Activated CD8-positive, alpha-beta T cell treated with anti-CD3 and anti-CD28 coated beads for 36 hours (primary cell): ENCODE measurements at regions of chr16 and their contacts with region 1.

Region 1: DNA sequence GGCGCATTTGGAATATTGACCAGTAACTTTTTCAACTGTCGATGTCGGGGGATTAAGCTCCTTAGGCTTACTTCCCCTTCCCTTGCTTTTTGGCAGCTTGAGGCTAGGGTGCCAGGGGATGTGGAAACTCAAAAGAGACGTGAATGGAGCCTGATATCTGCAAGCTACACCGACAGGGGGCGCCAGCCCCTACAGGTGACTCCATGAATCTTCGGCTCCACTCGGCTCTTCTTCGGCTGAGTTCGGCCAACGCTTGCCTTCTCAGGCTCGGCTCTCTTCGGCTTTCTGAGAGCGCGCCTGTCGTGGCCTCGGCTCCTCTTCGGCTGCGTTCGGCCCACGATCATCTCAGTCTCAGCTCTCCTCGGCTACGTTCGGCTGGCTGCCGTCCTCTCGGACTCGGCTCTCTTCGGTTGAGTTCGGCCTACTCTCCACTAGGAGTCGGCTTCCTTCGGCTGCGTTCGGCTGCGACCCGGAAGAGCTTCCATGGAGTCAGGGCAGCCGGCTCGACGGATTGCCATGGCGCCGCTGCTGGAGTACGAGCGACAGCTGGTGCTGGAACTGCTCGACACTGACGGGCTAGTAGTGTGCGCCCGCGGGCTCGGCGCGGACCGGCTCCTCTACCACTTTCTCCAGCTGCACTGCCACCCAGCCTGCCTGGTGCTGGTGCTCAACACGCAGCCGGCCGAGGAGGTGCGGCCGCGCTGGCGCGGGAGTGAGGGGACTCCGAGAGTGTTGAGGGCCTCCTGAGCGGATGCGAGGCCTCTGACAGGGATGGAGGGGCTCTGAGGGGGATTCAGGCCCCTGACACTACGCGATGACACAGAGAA is at the start of gene ERCC4:
- DNase-seq: peak; percentile 100
- ATAC-seq: peak; percentile 98
- H3K4me3 Mint-ChIP-seq: peak within 1 kb of the TSS; percentile 93
- H3K27ac Mint-ChIP-seq: peak within 1 kb of the TSS; percentile 84
- H3K4me1 Mint-ChIP-seq: peaks cover 18% of the 10 kb centered on the region
- H3K27me3 Mint-ChIP-seq: no peaks in the 10 kb centered on the region
- CTCF ChIP-seq: peak; percentile 92
- total RNA-seq, gene ERCC4: 6.2 to 13.3 TPM

Region 2: DNA sequence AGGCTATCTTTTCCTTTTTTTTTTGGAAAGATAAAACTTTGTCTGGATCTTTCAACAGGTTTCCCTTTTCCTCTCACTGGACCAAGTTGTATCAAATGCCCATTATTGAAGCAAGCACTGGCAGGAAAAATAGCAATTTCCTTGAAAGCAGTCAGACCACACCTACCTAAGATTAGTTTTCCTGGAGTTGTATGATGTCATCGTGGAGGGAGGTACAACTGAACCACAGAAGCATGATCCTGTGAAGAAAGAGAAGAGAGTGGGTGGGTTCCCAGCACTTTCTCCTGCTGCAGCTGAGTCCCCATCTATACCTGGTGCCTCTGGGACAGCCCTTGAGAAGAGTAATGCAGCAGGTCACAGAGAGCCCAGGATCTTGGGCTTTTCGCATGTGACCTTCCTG is 63.5 kb before region 1 on chr16:
- CTCF ChIA-PET with region 1: no interaction called
- POLR2A ChIA-PET with region 1: no interaction called
- intact Hi-C with region 1: no loop called
- DNase-seq: no peak
- ATAC-seq: no peak
- H3K4me3 Mint-ChIP-seq: no peak overlapping the region
- H3K27ac Mint-ChIP-seq: no peak overlapping the region
- H3K4me1 Mint-ChIP-seq: no peaks in the 10 kb centered on the region
- H3K27me3 Mint-ChIP-seq: peaks cover 20% of the 10 kb centered on the region
- CTCF ChIP-seq: no peak

Region 3: DNA sequence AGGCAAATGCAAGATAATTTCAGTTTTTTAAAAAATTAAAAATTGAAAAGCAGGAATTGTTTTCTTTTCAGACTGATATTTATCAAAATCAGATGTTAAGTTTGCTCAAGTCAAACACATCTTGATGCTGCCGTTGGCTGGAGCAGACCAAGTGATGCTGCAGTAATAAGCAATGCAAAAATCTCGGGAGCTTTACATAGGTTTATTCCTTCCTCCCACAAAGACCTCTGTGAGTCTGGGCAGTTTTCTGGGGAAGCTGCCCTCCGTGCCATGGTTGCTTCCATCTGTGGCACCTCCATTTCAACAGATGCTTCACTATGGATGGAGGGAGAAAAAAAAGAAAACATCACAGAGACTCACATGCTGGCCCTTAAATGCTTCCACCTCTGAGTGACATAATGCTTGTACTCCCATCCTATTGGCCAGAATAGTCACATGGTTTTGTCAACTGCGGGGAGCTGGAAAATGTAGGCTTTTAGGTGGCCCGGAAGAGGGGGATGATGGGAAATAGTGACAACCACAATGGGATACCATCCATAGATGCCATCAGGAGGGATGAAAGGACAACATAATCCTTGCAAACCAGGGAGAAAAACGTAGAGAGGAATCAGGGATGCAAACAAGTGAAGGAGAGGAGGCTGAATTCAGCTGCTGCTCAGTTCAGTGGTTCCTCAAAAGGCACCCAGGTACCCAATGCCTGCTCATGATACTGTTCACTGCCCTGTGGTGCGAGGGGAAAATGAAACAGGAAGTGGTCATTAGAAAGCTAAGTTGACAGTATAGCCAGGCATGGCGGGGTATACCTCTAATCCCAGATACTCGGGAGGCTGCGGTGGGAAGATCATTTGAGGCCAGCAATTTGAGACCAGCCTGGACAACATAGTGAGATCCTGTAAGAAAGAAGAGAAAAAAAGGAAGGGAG is 13.5 kb before region 1 on chr16:
- CTCF ChIA-PET with region 1: interaction called, 40 read pairs
- POLR2A ChIA-PET with region 1: no interaction called
- intact Hi-C with region 1: no loop called
- DNase-seq: no peak
- ATAC-seq: no peak
- H3K4me3 Mint-ChIP-seq: no peak overlapping the region
- H3K27ac Mint-ChIP-seq: no peak overlapping the region
- H3K4me1 Mint-ChIP-seq: peaks cover 4% of the 10 kb centered on the region
- H3K27me3 Mint-ChIP-seq: peaks cover 31% of the 10 kb centered on the region
- CTCF ChIP-seq: no peak

Region 4: GRCh38 chr16:13940397-13940933 is 20.6 kb after region 1 on chr16:
- CTCF ChIA-PET with region 1: interaction called, 74 read pairs
- POLR2A ChIA-PET with region 1: no interaction called
- intact Hi-C with region 1: no loop called
- DNase-seq: no peak
- ATAC-seq: no peak
- H3K4me3 Mint-ChIP-seq: no peak overlapping the region
- H3K27ac Mint-ChIP-seq: no peak overlapping the region
- H3K4me1 Mint-ChIP-seq: peaks cover 8% of the 10 kb centered on the region
- H3K27me3 Mint-ChIP-seq: no peaks in the 10 kb centered on the region
- CTCF ChIP-seq: no peak

Region 5: DNA sequence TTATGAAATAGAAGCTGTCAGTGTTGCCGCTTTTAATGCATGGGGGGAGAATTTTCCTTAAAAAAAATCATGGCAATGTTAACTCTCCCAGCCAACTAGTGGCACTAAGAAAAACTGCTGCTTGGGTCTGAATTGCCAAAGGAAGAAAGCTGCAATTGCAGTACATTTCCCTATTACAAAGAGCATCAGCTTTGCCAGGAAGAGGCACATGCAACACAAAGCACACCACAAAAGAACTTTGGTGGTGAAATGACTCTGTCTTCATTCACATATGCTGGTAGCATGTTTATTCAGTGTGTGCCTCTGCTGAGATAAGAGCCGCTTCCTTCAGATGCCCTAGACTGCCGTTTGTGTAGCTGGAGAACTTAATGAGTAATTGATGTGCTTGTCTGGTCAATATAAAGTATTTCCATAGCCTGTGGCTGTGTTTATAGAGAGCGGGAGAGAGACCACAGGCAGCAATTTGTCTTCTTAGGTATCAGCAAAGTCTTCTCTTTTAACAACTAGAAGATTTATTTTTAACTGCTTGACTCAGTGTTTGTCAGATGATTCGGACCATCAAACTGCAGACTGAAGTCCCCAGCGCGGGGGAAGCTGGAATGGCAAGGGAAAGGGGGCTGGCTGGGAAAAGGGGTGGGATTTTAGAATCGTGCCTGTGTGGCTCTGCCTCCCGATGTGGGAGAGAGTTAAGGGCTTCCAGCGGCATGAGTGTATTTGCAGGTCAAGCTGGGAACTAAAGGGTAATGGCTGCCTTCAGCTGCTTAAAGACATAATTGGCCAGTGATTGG is 266.3 kb after region 1 on chr16:
- CTCF ChIA-PET with region 1: interaction called, 17 read pairs
- POLR2A ChIA-PET with region 1: no interaction called
- intact Hi-C with region 1: no loop called
- DNase-seq: peak; percentile 20
- ATAC-seq: peak; percentile 80
- H3K4me3 Mint-ChIP-seq: no peak overlapping the region
- H3K27ac Mint-ChIP-seq: no peak overlapping the region
- H3K4me1 Mint-ChIP-seq: peaks cover 20% of the 10 kb centered on the region
- H3K27me3 Mint-ChIP-seq: no peaks in the 10 kb centered on the region
- CTCF ChIP-seq: no peak

Region 6: DNA sequence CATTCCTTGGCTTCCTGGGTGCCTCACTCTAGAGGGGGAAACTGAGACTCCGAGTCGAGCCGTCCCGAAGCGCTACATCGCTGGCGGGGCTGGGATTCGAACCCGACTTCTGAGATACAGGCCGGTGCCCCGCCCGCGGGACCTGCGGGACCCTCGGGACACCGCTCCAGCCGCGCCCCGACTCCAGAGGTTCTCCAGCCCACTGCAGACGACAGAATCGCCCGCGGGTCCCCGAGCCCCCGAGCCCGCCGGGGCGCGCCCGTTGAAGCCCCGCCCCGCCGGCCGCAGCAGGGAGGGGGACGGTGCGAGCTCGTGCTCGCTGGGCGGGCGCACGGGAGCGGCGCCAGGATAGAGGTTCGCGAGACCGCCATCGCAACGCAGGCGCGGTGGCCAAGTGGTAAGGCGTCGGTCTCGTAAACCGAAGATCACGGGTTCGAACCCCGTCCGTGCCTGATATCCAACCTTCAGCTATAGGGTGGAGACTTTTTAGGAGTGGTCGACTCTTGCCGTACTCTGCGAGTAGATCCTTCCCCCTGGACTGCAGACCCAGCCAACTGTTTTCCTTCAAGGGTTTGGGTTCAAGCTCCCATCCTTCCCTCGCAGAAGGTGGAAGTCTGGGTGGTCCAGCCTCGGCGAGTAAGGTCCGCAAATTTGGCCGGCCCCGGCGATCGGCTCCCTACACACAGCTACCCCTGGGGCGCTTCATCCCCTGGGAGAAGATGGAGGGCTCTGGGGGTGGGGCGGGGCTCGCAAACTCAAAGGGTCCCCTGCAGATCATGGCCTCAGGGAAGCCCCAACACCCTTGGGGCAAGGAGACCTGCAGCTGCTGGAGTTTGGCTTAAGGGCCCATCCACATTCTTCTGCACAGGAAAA is 365.9 kb after region 1 on chr16:
- CTCF ChIA-PET with region 1: interaction called, 15 read pairs
- POLR2A ChIA-PET with region 1: interaction called, 4 read pairs
- intact Hi-C with region 1: loop called (anchors 10 kb)
- DNase-seq: peak; percentile 92
- ATAC-seq: peak; percentile 81
- H3K4me3 Mint-ChIP-seq: peak overlapping the region; percentile 77
- H3K27ac Mint-ChIP-seq: peak overlapping the region; percentile 73
- H3K4me1 Mint-ChIP-seq: peaks cover 12% of the 10 kb centered on the region
- H3K27me3 Mint-ChIP-seq: no peaks in the 10 kb centered on the region
- CTCF ChIP-seq: no peak